ENCODE measurements at regions of chr6 and their contacts with region 1.

Region 1: DNA sequence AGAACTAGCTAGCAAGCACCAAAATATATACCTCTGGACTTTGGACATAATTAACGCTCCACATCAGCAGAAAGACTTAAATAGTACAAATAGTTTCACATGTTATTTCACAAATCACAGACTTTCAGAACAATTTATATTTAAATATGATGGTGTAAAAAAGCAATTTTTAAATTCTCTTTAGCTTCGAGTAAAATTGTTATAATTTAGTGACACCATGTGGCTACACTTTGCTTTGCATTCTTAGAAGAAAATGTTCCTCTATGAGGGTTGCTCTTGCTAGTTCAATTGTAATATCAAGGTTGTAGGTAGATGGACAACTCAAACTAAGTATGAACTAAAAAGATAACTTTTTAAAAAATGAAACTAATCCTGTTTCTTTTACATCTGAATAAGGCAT is 69.0 kb downstream of the BTBD9 start:
- DNase-seq: no peak
- ATAC-seq: no peak
- H3K4me3 Mint-ChIP-seq: no peak overlapping the region
- H3K27ac Mint-ChIP-seq: peak overlapping the region; percentile 92
- H3K4me1 Mint-ChIP-seq: peaks cover 27% of the 10 kb centered on the region
- H3K27me3 Mint-ChIP-seq: no peaks in the 10 kb centered on the region
- CTCF ChIP-seq: no peak

Region 2: GRCh38 chr6:37324131-37325033 is 1246.4 kb before region 1 on chr6:
- CTCF ChIA-PET with region 1: interaction called, 3 read pairs
- POLR2A ChIA-PET with region 1: no interaction called
- intact Hi-C with region 1: loop called (anchors 10 kb)
- DNase-seq: no peak
- ATAC-seq: no peak
- H3K4me3 Mint-ChIP-seq: no peak overlapping the region
- H3K27ac Mint-ChIP-seq: no peak overlapping the region
- H3K4me1 Mint-ChIP-seq: peaks cover 2% of the 10 kb centered on the region
- H3K27me3 Mint-ChIP-seq: no peaks in the 10 kb centered on the region
- CTCF ChIP-seq: no peak

Region 3: DNA sequence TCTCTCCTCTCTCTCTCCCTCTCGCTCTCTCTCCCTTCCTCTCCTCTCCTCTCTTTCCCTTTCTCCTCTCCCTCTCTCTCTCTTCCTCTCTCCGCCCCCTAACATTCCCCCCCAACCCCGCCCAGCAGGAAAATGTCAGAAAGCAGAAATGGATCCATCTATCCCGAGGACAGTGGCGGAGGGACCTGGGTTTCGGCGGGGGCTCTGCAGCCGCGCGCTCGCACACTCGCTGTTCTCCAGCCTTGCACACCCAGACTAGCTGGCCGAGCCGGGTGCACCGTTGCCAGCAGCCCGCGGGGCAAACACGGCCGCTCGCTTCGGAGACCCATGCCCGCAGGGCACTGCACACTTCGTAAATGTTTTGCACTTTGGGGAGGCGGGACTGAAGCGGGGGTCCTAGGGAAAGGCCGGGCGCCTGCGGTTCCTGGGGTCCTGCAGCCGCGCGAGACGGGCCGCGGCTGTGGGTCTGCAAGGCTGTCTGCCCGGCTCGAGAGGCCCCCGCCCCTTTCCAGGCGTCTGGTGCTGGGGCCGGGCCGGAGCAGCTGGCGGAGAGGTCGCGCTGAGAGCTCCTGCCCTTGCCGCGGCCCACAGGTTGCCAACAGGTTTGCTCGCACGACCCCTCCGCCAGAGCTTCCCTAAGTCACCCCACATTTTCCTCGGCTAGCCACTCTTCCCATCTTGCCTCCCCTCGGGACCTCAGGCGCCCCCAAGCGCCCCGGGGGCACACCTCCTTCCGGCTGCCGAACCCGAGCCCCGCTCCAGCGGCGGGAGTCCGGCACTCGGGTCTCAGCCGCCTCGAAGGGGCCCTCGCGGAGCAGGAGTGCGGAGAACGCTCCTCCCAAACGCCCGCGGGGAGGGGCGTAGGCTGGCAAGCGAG is 872.3 kb before region 1 on chr6:
- CTCF ChIA-PET with region 1: interaction called, 6 read pairs
- POLR2A ChIA-PET with region 1: no interaction called
- intact Hi-C with region 1: loop called (anchors 2 kb)
- DNase-seq: peak; percentile 58
- ATAC-seq: peak; percentile 41
- H3K4me3 Mint-ChIP-seq: peak overlapping the region; percentile 97
- H3K27ac Mint-ChIP-seq: peak overlapping the region; percentile 93
- H3K4me1 Mint-ChIP-seq: peaks cover 19% of the 10 kb centered on the region
- H3K27me3 Mint-ChIP-seq: peaks cover 15% of the 10 kb centered on the region
- CTCF ChIP-seq: no peak

Region 4: GRCh38 chr6:38034274-38034914 is 536.4 kb before region 1 on chr6:
- CTCF ChIA-PET with region 1: interaction called, 12 read pairs
- POLR2A ChIA-PET with region 1: no interaction called
- intact Hi-C with region 1: loop called (anchors 2 kb)
- DNase-seq: no peak
- ATAC-seq: no peak
- H3K4me3 Mint-ChIP-seq: no peak overlapping the region
- H3K27ac Mint-ChIP-seq: no peak overlapping the region
- H3K4me1 Mint-ChIP-seq: peaks cover 38% of the 10 kb centered on the region
- H3K27me3 Mint-ChIP-seq: no peaks in the 10 kb centered on the region
- CTCF ChIP-seq: no peak

Region 5: GRCh38 chr6:38552121-38552520 is 18.6 kb before region 1 on chr6:
- CTCF ChIA-PET with region 1: interaction called, 17 read pairs
- POLR2A ChIA-PET with region 1: interaction called, 3 read pairs
- intact Hi-C with region 1: loop called (anchors 1 kb)
- DNase-seq: no peak
- ATAC-seq: peak; percentile 97
- H3K4me3 Mint-ChIP-seq: no peak overlapping the region
- H3K27ac Mint-ChIP-seq: no peak overlapping the region
- H3K4me1 Mint-ChIP-seq: peaks cover 6% of the 10 kb centered on the region
- H3K27me3 Mint-ChIP-seq: no peaks in the 10 kb centered on the region
- CTCF ChIP-seq: no peak

Region 6: DNA sequence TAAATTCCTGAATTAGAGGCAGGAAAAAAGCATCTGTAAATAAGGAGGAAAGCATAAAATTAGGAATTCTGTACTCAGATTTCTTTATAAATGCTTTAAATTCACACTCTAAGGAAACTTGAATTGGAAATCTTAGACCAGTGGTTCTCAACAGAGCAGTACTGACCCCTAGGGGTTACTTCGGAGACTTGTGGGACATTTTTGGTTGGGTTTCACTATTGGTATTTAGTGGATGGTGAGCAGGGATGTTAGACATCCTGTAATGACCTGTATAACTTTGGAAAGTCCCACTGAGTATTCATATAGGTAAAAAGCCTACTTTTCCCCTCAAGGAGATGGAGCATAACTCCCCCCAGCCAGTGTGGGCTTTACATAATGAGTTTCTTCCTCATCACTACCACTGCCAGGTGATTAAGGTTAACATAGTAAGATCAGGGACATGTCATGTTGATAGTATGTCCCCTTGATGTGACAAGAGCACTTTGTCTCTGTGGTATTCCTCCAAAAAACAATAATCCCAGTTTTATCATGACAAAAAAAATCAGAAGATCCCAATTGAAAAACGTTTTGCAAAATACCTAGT is 101.2 kb after region 1 on chr6:
- CTCF ChIA-PET with region 1: no interaction called
- POLR2A ChIA-PET with region 1: no interaction called
- intact Hi-C with region 1: loop called (anchors 2 kb)
- DNase-seq: no peak
- ATAC-seq: peak; percentile 66
- H3K4me3 Mint-ChIP-seq: no peak overlapping the region
- H3K27ac Mint-ChIP-seq: no peak overlapping the region
- H3K4me1 Mint-ChIP-seq: peaks cover 41% of the 10 kb centered on the region
- H3K27me3 Mint-ChIP-seq: no peaks in the 10 kb centered on the region
- CTCF ChIP-seq: no peak

Region 7: DNA sequence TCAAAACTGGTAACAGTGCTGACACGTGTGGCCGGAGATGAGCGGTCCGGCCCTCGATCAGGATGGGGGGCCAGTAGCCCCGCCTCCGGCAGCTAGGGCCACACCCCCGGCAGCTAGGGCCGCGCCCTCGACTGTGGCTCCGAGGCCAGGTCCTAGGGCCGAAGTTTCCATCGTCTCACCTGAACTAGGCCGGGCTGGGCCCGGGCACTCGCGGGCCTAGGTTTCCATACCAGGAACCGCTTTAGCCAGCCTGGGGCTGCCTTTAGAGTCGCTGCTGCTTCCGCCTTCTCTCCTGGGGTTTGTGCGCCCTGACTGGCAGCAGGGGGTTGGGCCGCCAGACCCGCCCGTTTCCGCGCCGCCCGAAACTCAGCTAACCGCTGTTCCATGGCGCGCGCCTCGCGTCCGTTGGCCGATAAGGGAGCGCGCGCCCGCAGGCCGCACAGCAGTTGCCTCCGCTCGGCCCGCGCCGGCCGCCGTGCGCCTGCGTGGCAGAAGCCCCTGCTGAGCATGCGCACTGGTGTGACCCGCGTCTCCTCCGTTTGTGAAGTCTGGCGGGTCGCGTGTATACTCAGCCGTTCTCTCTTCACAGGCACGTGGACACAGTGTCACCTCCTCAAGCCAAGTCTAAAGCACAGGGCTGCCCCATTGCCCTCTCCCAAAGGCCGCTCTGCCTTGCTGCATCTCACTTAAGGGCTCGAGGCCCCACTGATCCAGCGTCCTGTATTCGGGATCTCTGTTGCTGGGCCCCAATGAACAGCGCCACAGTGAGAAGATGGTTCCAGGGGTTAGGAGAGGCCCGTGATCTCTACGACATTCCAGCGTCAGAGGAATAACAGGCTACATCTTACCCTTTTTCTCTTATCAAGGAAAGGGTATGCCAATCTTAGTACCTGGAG is 544.2 kb after region 1 on chr6 and contains the start of gene SAYSD1:
- CTCF ChIA-PET with region 1: no interaction called
- POLR2A ChIA-PET with region 1: no interaction called
- intact Hi-C with region 1: no loop called
- DNase-seq: peak; percentile 93
- ATAC-seq: peak; percentile 89
- H3K4me3 Mint-ChIP-seq: peak within 1 kb of the TSS; percentile 94
- H3K27ac Mint-ChIP-seq: peak within 1 kb of the TSS; percentile 94
- H3K4me1 Mint-ChIP-seq: peaks cover 35% of the 10 kb centered on the region
- H3K27me3 Mint-ChIP-seq: no peaks in the 10 kb centered on the region
- CTCF ChIP-seq: no peak
- total RNA-seq, gene SAYSD1: 9.6 and 9.7 TPM in 2 replicates

Measured in activated B cell treated with CpG ODN at 0.5 μM for 24 hours (primary cell).